ENCODE measurements at regions of chr1 and their contacts with region 1.

Region 1: DNA sequence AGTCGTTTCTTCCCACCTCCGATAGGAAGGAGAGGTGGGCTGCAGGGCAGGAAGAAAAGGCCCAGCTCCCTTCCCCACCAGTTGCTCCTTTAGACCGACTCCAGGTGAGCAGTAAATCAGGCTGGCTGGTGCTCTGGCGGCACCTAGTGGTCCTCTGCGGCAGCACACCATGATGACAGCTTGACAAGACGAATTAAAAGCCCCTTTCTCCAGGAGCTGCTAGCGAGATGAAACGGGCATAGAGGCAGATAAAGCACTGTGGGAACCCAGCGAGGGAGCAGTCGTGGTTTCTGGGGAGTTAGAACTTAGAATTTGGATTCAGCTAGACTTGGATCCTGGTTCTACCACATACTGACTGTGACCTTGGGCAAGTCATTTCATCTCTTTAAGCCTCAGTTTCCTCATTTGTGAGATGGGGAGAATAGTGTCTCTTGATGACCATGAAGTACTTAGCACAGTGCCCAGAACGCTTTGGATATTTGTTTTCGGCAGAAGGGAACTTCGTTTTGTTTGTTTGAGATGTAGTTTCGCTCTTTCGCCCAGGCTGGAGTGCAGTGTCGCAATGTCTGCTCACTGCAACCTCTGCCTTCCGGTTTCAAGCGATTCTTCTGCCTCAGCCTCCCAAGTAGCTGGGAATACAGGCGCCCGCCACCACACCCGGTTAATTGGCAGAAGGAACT is 21.8 kb upstream of the COL9A2 start:
- DNase-seq: peak; percentile 96
- ATAC-seq: peak; percentile 92
- H3K4me3 Mint-ChIP-seq: no peak overlapping the region
- H3K27ac Mint-ChIP-seq: peak overlapping the region; percentile 9
- H3K4me1 Mint-ChIP-seq: peaks cover 41% of the 10 kb centered on the region
- H3K27me3 Mint-ChIP-seq: no peaks in the 10 kb centered on the region
- CTCF ChIP-seq: peak; percentile 96

Region 2: GRCh38 chr1:40096977-40097782 is 241.7 kb before region 1 on chr1 and contains the start of gene PPT1:
- CTCF ChIA-PET with region 1: interaction called, 13 read pairs
- POLR2A ChIA-PET with region 1: no interaction called
- intact Hi-C with region 1: no loop called
- DNase-seq: peak; percentile 82
- ATAC-seq: peak; percentile 88
- H3K4me3 Mint-ChIP-seq: peak within 1 kb of the TSS; percentile 93
- H3K27ac Mint-ChIP-seq: peak within 1 kb of the TSS; percentile 93
- H3K4me1 Mint-ChIP-seq: peaks cover 30% of the 10 kb centered on the region
- H3K27me3 Mint-ChIP-seq: no peaks in the 10 kb centered on the region
- CTCF ChIP-seq: peak; percentile 52
- total RNA-seq, gene PPT1: 60.6 to 69.1 TPM

Region 3: DNA sequence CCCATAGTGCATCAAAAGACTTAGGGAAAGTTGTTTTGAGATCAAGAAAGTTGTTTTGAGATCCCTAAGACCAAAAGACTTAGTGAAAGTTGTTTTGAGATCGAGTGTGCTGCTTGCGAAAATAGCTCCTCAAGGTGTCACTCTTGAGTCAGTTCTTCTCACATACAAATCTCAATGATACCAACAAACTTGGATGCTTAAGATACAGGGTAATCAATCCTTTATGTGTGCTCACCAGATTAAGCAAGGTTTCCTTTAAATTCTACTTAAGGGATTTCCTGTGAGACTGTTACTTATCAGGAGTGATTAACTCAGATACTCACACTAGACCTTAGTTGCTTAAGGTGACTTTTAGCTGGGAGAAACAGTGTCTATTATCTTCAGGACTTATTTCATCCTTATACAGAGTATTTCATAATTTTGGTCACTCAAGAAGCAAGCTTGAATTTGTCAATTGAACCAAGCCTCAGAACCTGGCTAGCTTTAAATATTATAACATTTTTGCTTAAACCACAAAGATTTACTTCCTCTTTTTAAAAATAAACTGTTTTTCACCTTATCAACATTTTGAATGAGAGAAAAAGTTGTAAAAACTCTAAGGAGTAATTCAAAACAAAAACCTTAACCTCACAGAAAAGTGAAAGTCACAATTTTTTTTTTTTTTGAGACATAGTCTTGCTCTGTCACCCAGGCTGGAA is 185.7 kb before region 1 on chr1:
- CTCF ChIA-PET with region 1: interaction called, 331 read pairs
- POLR2A ChIA-PET with region 1: interaction called, 5 read pairs
- intact Hi-C with region 1: loop called (anchors 2 kb)
- DNase-seq: peak; percentile 52
- ATAC-seq: peak; percentile 82
- H3K4me3 Mint-ChIP-seq: peak overlapping the region; percentile 34
- H3K27ac Mint-ChIP-seq: peak overlapping the region; percentile 28
- H3K4me1 Mint-ChIP-seq: peaks cover 7% of the 10 kb centered on the region
- H3K27me3 Mint-ChIP-seq: no peaks in the 10 kb centered on the region
- CTCF ChIP-seq: peak; percentile 74

Region 4: DNA sequence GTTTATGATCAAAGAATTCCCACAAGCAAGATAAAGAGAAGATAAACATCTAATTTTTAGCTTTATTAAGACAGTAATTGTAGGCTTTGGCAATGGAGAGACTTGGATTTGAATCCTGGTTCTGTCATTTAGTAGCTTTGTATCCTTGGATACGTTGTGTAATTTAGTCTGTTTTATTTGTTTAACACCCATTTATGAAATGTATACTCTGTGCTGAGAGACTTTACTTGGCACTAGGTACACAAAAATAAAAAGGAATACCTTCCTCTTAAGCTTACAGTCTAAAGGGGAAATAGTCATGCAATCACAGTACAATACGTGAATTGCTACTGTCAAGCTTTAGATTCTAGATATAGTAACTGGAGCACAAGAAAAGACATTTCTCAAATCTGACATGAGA is 57.0 kb before region 1 on chr1:
- CTCF ChIA-PET with region 1: interaction called, 14 read pairs
- POLR2A ChIA-PET with region 1: no interaction called
- intact Hi-C with region 1: no loop called
- DNase-seq: no peak
- ATAC-seq: no peak
- H3K4me3 Mint-ChIP-seq: no peak overlapping the region
- H3K27ac Mint-ChIP-seq: no peak overlapping the region
- H3K4me1 Mint-ChIP-seq: no peaks in the 10 kb centered on the region
- H3K27me3 Mint-ChIP-seq: no peaks in the 10 kb centered on the region
- CTCF ChIP-seq: no peak

Region 5: GRCh38 chr1:40352126-40352525 is 13.2 kb after region 1 on chr1:
- CTCF ChIA-PET with region 1: interaction called, 24 read pairs
- POLR2A ChIA-PET with region 1: interaction called, 4 read pairs
- intact Hi-C with region 1: no loop called
- DNase-seq: no peak
- ATAC-seq: no peak
- H3K4me3 Mint-ChIP-seq: no peak overlapping the region
- H3K27ac Mint-ChIP-seq: no peak overlapping the region
- H3K4me1 Mint-ChIP-seq: peaks cover 2% of the 10 kb centered on the region
- H3K27me3 Mint-ChIP-seq: no peaks in the 10 kb centered on the region
- CTCF ChIP-seq: no peak

Region 6: DNA sequence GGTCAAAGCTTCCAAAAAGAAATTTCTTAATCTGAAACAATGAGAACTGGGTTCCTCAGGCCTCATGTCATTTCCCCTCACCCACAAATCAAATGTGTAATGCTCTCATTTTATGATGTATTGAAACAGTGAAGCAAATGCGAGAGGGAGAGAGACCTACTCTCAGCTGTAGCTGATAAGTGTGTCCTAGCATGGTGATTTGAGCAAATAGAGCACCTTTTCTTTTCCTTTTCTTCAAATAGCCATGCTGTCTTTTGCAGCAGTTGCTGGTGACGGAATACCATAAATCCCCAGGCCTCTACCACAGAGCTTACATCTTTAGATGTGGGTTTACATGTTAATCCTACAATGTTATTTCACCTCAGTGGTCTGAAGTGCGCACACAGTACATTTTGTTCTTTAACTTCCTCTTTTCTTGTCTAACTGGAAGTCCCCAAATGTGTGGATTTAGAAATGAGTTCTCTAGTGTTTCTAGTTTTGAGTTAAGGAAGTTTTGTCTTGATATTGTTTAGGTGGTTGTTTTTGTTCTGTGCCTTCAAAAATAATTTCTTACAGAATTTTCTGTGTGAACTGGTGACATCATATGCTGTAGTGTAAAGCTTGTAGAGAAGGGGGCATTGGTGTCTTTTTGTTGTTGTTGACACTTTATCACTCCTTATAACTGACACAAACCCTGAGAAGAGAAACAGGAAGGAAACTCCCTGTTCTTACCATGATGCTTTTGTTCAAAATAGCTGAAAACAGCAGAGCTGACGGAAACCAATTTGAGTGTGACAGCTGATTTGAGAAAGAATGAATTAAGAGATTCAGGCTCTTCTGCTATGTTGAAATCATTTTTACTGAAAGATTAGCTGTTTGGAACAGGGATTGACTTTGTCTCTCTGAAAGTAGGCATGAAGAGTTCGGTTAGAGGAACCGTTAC is 46.8 kb after region 1 on chr1:
- CTCF ChIA-PET with region 1: interaction called, 27 read pairs
- POLR2A ChIA-PET with region 1: interaction called, 14 read pairs
- intact Hi-C with region 1: no loop called
- DNase-seq: peak; percentile 85
- ATAC-seq: peak; percentile 67
- H3K4me3 Mint-ChIP-seq: peak overlapping the region; percentile 78
- H3K27ac Mint-ChIP-seq: peak overlapping the region; percentile 99
- H3K4me1 Mint-ChIP-seq: peaks cover 78% of the 10 kb centered on the region
- H3K27me3 Mint-ChIP-seq: no peaks in the 10 kb centered on the region
- CTCF ChIP-seq: no peak

Measured in activated CD8-positive, alpha-beta T cell treated with anti-CD3 and anti-CD28 coated beads for 36 hours (primary cell).